OCI-LY7 (cell line): ENCODE measurements at regions of chr10 and their contacts with region 1.

Region 1: DNA sequence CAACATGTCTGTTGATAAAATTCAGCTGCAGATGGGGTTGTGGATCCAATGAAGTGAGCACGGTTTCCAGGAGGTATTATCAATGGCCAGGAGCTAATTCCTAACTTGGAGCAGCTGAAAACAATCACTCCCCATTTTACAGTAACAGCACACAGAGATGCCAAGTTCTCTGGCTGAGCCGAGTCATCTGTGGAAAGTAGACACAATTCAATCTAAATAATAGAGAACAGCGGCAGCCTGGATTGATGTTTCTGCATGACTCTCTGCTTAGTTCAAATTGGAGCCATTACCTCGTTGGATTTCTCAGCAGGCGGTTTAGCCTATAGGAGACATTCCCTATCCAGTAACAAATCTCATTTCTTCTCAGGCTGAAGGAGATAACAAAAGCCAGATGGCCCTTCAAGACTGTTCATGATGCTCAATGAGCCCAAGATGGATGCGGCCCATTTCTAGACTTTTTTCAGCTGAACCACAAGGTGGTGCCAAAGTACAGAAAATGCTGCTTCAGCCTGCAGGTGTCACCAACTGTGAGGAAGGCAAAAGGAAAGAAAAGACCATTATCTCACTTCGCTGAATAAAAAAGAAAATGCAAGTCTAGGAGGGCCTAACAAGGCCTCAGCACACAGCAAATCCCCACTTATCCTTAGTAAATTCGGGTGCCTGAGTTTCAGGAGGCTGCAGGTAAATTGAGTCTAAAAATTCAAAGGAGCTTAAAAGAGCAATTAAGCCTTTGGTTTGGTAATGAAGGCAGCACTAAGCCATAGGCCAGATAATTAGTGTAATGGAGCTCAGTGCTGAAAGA is 83.7 kb downstream of the SLC16A9 start:
- DNase-seq: peak; percentile 73
- H3K4me3 ChIP-seq: no peak overlapping the region
- H3K27ac ChIP-seq: no peak overlapping the region
- H3K4me1 ChIP-seq: no peaks in the 10 kb centered on the region
- CTCF ChIP-seq: peak; percentile 94

Region 2: DNA sequence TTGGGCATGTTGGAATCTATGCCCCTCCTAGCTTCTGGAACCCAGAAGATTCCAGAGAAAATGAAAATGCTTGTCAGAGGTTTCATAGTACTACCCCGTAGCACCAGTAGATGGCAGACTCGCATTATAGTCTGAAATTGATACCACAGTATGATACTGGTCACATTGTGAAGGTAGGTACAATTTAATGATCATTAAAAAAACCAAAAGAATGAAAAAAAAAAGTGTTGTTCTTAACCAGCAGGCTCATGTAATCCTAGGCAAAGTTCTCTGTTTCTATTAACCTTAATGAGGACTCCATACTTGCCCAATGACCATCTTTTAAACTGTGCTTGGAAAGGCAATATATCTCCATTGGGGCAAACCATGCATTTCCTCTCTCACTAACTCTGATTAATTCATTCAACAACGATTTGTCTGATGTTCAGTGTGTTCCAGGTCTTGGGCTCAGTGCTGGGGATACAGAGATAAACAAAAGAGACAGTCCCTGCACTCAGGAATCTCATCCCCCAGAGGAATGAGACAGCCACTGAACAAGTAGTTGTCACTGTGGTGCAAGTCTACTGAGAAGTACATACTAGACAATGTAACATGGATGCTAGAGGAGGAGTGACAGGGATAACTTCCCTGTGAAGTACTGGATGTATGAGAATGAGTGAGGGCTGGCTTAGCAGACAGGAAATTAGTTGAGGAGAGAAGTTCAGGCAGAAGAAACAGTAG is 673.0 kb before region 1 on chr10:
- CTCF ChIA-PET with region 1: no interaction called
- POLR2A ChIA-PET with region 1: no interaction called
- intact Hi-C with region 1: loop called (anchors 5 kb)
- DNase-seq: peak; percentile 31
- H3K4me3 ChIP-seq: no peak overlapping the region
- H3K27ac ChIP-seq: no peak overlapping the region
- H3K4me1 ChIP-seq: no peaks in the 10 kb centered on the region
- CTCF ChIP-seq: peak; percentile 88

Region 3: GRCh38 chr10:59513558-59513957 is 112.4 kb before region 1 on chr10:
- CTCF ChIA-PET with region 1: no interaction called
- POLR2A ChIA-PET with region 1: no interaction called
- intact Hi-C with region 1: no loop called
- DNase-seq: no peak
- H3K4me3 ChIP-seq: no peak overlapping the region
- H3K27ac ChIP-seq: no peak overlapping the region
- H3K4me1 ChIP-seq: no peaks in the 10 kb centered on the region
- CTCF ChIP-seq: no peak

Region 4: DNA sequence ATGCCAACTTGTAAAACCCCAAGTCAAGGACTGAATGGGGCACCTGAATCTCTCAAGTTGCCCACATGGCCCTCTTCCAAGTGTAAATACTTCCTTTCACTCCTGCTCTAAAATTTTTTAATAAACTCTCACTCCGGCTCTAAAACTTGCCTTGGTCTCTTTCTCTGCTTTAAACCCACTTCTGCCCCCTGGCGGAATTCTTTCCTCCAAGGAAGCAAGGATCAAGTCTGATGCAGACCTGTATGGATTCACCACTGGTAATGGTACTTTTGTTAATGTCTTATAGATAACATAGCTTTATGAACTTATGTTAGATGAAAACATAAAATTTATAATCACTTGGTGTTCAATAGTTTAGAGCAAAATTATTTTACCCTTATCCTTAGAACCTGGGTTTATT is 49.9 kb after region 1 on chr10:
- CTCF ChIA-PET with region 1: no interaction called
- POLR2A ChIA-PET with region 1: interaction called, 3 read pairs
- intact Hi-C with region 1: loop called (anchors 1 kb)
- DNase-seq: peak; percentile 30
- H3K4me3 ChIP-seq: no peak overlapping the region
- H3K27ac ChIP-seq: no peak overlapping the region
- H3K4me1 ChIP-seq: peaks cover 5% of the 10 kb centered on the region
- CTCF ChIP-seq: peak; percentile 74

Region 5: DNA sequence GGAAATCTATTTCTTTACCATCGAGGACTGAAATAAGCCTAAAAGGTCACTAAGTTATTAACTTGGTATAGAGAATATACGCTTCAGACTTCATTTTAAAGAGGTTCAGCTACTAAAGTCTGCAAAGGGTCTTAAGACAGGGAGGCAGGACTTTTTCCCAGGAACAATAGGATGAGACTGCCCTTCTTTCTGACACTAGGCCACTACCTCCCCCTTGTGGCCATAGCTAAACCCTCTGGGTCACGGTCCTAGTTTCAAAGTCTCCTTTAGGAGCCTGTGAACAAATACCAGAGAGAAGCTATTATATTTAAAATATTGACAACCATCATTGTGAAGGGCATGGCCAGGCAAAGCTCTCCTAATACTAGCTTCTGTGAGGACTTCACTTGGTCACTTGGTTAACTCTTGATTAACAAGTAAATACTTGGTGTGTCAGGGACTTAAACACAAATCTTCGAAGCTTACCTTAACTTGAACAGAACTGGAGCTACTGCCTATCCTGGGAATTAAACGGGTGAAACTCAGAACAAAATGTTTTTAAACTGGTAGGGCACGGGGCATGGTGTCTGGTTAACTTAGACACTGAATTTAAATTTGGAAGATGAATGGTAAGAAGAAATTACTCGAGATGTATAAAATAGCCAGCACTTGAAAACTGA is 204.8 kb after region 1 on chr10:
- CTCF ChIA-PET with region 1: no interaction called
- POLR2A ChIA-PET with region 1: no interaction called
- intact Hi-C with region 1: loop called (anchors 1 kb)
- DNase-seq: peak; percentile 53
- H3K4me3 ChIP-seq: no peak overlapping the region
- H3K27ac ChIP-seq: no peak overlapping the region
- H3K4me1 ChIP-seq: peaks cover 39% of the 10 kb centered on the region
- CTCF ChIP-seq: peak; percentile 89

Region 6: GRCh38 chr10:60032723-60033122 is 406.8 kb after region 1 on chr10:
- CTCF ChIA-PET with region 1: no interaction called
- POLR2A ChIA-PET with region 1: no interaction called
- intact Hi-C with region 1: loop called (anchors 1 kb)
- DNase-seq: peak; percentile 62
- H3K4me3 ChIP-seq: no peak overlapping the region
- H3K27ac ChIP-seq: no peak overlapping the region
- H3K4me1 ChIP-seq: no peaks in the 10 kb centered on the region
- CTCF ChIP-seq: peak; percentile 87

Region 7: GRCh38 chr10:60208676-60209269 is 582.9 kb after region 1 on chr10:
- CTCF ChIA-PET with region 1: no interaction called
- POLR2A ChIA-PET with region 1: no interaction called
- intact Hi-C with region 1: loop called (anchors 1 kb)
- DNase-seq: peak; percentile 48
- H3K4me3 ChIP-seq: no peak overlapping the region
- H3K27ac ChIP-seq: no peak overlapping the region
- H3K4me1 ChIP-seq: peaks cover 22% of the 10 kb centered on the region
- CTCF ChIP-seq: peak; percentile 91

Region 8: GRCh38 chr10:60646966-60647796 is 1021.3 kb after region 1 on chr10:
- CTCF ChIA-PET with region 1: no interaction called
- POLR2A ChIA-PET with region 1: no interaction called
- intact Hi-C with region 1: loop called (anchors 5 kb)
- DNase-seq: peak; percentile 63
- H3K4me3 ChIP-seq: no peak overlapping the region
- H3K27ac ChIP-seq: no peak overlapping the region
- H3K4me1 ChIP-seq: peaks cover under 1% of the 10 kb centered on the region
- CTCF ChIP-seq: peak; percentile 93